MCF 10A (cell line): ENCODE measurements at regions of chr3 and their contacts with region 1.

Region 1: DNA sequence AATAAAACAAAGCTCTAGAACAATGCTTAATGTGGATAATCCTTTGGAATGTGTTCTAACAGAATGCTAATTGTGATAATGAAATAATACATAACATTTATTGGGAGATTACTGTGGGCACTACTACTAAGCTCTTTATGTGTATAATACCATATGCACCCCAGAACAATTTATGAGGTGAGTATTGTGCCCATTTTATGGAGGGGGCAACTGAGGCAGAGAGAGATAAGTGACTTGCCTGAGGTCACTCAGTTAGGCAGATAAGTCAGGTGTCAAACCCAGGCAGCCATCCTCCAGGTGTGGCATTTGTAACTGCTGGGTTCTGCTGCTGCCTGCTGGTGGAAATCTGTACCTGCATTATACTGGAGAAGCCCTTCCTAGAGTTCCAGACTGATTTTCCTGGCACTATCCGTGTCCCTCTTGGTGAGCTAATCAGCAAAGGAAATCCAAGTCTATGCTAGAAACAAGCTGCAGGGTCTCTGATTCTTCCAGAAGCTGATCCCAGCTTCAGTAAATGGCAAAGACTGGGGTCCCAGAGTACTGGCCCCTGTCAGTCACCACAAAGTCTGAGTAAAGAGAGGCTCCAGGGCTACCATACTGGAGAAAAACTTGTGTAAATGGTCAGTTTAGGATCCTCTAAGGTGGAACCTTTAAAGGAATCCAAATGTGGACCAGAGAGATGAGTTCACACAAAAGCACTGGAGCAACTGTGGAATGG is 22.6 kb upstream of the RBP1 start:
- DNase-seq: peak; percentile 56
- H3K4me3 Mint-ChIP-seq: no peak overlapping the region
- H3K27ac Mint-ChIP-seq: no peak overlapping the region
- H3K4me1 Mint-ChIP-seq: peaks cover 19% of the 10 kb centered on the region
- H3K27me3 Mint-ChIP-seq: no peaks in the 10 kb centered on the region
- CTCF ChIP-seq: peak; percentile 77

Region 2: GRCh38 chr3:137568880-137569279 is 1993.2 kb before region 1 on chr3:
- CTCF ChIA-PET with region 1: no interaction called
- POLR2A ChIA-PET with region 1: no interaction called
- intact Hi-C with region 1: no loop called
- DNase-seq: no peak
- H3K4me3 Mint-ChIP-seq: no peak overlapping the region
- H3K27ac Mint-ChIP-seq: no peak overlapping the region
- H3K4me1 Mint-ChIP-seq: no peaks in the 10 kb centered on the region
- H3K27me3 Mint-ChIP-seq: peaks cover 84% of the 10 kb centered on the region
- CTCF ChIP-seq: no peak

Region 3: DNA sequence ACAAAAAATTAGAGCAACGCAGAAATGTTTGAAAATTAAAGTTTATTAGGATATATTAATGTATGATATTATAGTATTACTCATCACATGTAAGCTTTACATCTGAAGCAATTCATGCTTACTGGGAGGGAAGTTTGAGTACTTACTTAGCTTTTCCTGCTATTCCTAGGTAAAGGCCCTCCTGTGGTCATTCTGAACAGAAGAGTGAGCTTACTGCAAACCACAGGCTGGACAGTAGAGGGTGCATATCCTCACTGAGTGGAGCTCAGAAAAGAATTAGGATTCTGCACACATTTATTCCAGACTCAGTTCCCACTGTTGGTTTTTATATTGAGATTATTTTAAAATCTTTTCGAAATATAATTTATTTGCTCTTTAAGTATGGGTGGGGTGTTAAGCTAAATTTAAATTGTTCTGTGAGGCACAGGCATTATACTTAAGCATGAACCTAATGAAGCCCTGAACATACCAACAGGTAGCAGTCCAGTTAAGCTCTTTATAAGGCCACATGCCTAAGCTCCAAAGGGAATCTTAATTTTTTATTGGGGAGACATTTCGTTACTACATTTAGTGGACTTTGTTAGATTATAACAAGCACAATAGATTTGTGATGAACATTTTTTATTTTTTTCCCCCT is 208.1 kb before region 1 on chr3:
- CTCF ChIA-PET with region 1: interaction called, 21 read pairs
- POLR2A ChIA-PET with region 1: interaction called, 3 read pairs
- intact Hi-C with region 1: loop called (anchors 1 kb)
- DNase-seq: peak; percentile 64
- H3K4me3 Mint-ChIP-seq: no peak overlapping the region
- H3K27ac Mint-ChIP-seq: no peak overlapping the region
- H3K4me1 Mint-ChIP-seq: no peaks in the 10 kb centered on the region
- H3K27me3 Mint-ChIP-seq: no peaks in the 10 kb centered on the region
- CTCF ChIP-seq: peak; percentile 73

Region 4: DNA sequence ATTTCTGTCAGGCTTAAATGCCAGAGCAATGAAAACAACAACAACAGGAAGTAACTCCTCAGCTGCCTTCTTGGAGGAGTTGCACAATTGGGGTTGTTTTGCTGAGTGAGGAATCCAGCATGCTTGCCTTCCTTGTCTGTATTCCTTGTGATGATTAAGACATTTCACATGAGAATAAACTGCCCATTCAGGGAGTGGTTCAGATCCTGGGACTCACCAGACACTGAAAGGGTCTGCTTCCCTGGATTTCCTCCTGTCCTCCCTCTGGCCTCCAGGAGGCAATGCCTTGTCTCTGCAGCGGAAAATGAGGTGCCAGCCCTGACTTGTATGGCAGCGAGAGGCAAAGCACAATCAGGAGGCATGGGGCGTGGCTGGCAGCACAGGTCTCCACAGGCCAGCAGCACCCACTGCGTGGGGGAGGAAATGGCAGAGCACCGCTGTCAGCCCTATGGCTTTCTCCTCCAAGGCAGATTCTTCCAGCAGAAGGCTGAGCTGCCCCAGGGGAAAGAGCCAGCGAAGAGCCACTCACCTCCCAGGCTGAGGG is 127.3 kb before region 1 on chr3:
- CTCF ChIA-PET with region 1: interaction called, 47 read pairs
- POLR2A ChIA-PET with region 1: interaction called, 7 read pairs
- intact Hi-C with region 1: loop called (anchors 2 kb)
- DNase-seq: peak; percentile 84
- H3K4me3 Mint-ChIP-seq: peak overlapping the region; percentile 35
- H3K27ac Mint-ChIP-seq: peak overlapping the region; percentile 96
- H3K4me1 Mint-ChIP-seq: peaks cover 19% of the 10 kb centered on the region
- H3K27me3 Mint-ChIP-seq: no peaks in the 10 kb centered on the region
- CTCF ChIP-seq: no peak

Region 5: GRCh38 chr3:139519998-139520737 is 42.0 kb before region 1 on chr3:
- CTCF ChIA-PET with region 1: interaction called, 8 read pairs
- POLR2A ChIA-PET with region 1: no interaction called
- intact Hi-C with region 1: loop called (anchors 1 kb)
- DNase-seq: peak; percentile 45
- H3K4me3 Mint-ChIP-seq: no peak overlapping the region
- H3K27ac Mint-ChIP-seq: no peak overlapping the region
- H3K4me1 Mint-ChIP-seq: no peaks in the 10 kb centered on the region
- H3K27me3 Mint-ChIP-seq: no peaks in the 10 kb centered on the region
- CTCF ChIP-seq: no peak

Region 6: GRCh38 chr3:139540651-139541151 is 21.4 kb before region 1 on chr3:
- CTCF ChIA-PET with region 1: interaction called, 34 read pairs
- POLR2A ChIA-PET with region 1: interaction called, 3 read pairs
- intact Hi-C with region 1: no loop called
- DNase-seq: no peak
- H3K4me3 Mint-ChIP-seq: no peak overlapping the region
- H3K27ac Mint-ChIP-seq: no peak overlapping the region
- H3K4me1 Mint-ChIP-seq: peaks cover 3% of the 10 kb centered on the region
- H3K27me3 Mint-ChIP-seq: no peaks in the 10 kb centered on the region
- CTCF ChIP-seq: no peak

Region 7: DNA sequence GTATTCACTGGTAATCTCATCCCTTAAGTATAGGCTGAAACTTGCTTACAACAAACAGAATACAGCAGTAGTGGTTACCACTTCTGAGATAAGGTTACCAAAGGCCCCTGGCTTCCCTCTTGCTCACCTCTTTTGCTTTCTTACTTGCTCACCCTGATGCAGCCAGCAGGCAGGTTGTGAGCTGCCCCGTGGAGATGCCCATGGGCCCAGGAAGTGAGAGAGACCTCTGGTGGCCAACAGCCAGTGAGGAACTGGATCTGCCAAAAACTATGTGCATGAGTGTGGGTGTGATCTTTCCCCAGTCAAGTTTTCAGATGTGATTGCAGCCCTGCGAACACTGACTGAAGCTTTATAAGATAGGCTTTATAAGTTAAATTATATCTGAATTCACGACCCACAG is 66.9 kb after region 1 on chr3:
- CTCF ChIA-PET with region 1: interaction called, 4 read pairs
- POLR2A ChIA-PET with region 1: no interaction called
- intact Hi-C with region 1: loop called (anchors 2 kb)
- DNase-seq: peak; percentile 71
- H3K4me3 Mint-ChIP-seq: no peak overlapping the region
- H3K27ac Mint-ChIP-seq: no peak overlapping the region
- H3K4me1 Mint-ChIP-seq: no peaks in the 10 kb centered on the region
- H3K27me3 Mint-ChIP-seq: no peaks in the 10 kb centered on the region
- CTCF ChIP-seq: no peak